Right lobe of liver (tissue), 6 donors: ENCODE measurements at regions of chr9 and their contacts with region 1.

Region 1: GRCh38 chr9:137772281-137772873 is 105.2 kb upstream of the CACNA1B start:
- DNase-seq: no peak
- ATAC-seq: no peak
- H3K4me3 ChIP-seq: no peak overlapping the region
- H3K27ac ChIP-seq: no peak overlapping the region
- H3K4me1 ChIP-seq: peaks cover 0 to 2% (median 0%) of the 10 kb centered on the region in 4 donors
- H3K27me3 ChIP-seq: no peaks in the 10 kb centered on the region
- CTCF ChIP-seq: peak in 2 of 4 donors; percentile 5 to 11
- POLR2A ChIP-seq: no peak

Region 2: GRCh38 chr9:137168905-137169856 is 603.2 kb before region 1 on chr9:
- intact Hi-C with region 1: loop called in 1 of 2 experiments (anchors 10 kb)
- DNase-seq: no peak
- ATAC-seq: peak in 3 of 4 donors; percentile 26 to 54 (median 48)
- H3K4me3 ChIP-seq: peak overlapping the region in 2 of 3 donors; percentile 6 to 19
- H3K27ac ChIP-seq: no peak overlapping the region
- H3K4me1 ChIP-seq: peaks cover 0 to 24% (median 0%) of the 10 kb centered on the region in 4 donors
- H3K27me3 ChIP-seq: peaks cover 0 to 53% of the 10 kb centered on the region in 2 donors
- CTCF ChIP-seq: no peak
- POLR2A ChIP-seq: no peak

Region 3: GRCh38 chr9:137731216-137731946 is 41.0 kb before region 1 on chr9:
- intact Hi-C with region 1: no loop called
- DNase-seq: no peak
- ATAC-seq: peak in 1 of 4 donors; percentile 22
- H3K4me3 ChIP-seq: no peak overlapping the region
- H3K27ac ChIP-seq: no peak overlapping the region
- H3K4me1 ChIP-seq: peaks cover 0 to 3% (median 0%) of the 10 kb centered on the region in 4 donors
- H3K27me3 ChIP-seq: no peaks in the 10 kb centered on the region
- CTCF ChIP-seq: no peak
- POLR2A ChIP-seq: no peak